ENCODE measurements at regions of chr9 and their contacts with region 1.

Region 1: GRCh38 chr9:20319641-20320337 is 302.5 kb downstream of the MLLT3 start:
- DNase-seq: peak in 2 of 5 donors; percentile 15 to 56
- H3K4me3 ChIP-seq: no peak overlapping the region
- H3K4me3 Mint-ChIP-seq: peak overlapping the region in 4 of 8 donors; percentile 20 to 53 (median 44)
- H3K27ac ChIP-seq: no peak overlapping the region
- H3K27ac Mint-ChIP-seq: peak overlapping the region; percentile 29 to 81 (median 61)
- H3K4me1 ChIP-seq: peaks cover 77% of the 10 kb centered on the region
- H3K4me1 Mint-ChIP-seq: peaks cover 49 to 92% (median 84%) of the 10 kb centered on the region in 4 donors
- H3K27me3 ChIP-seq: no peaks in the 10 kb centered on the region
- H3K27me3 Mint-ChIP-seq: no peaks in the 10 kb centered on the region

Region 2: DNA sequence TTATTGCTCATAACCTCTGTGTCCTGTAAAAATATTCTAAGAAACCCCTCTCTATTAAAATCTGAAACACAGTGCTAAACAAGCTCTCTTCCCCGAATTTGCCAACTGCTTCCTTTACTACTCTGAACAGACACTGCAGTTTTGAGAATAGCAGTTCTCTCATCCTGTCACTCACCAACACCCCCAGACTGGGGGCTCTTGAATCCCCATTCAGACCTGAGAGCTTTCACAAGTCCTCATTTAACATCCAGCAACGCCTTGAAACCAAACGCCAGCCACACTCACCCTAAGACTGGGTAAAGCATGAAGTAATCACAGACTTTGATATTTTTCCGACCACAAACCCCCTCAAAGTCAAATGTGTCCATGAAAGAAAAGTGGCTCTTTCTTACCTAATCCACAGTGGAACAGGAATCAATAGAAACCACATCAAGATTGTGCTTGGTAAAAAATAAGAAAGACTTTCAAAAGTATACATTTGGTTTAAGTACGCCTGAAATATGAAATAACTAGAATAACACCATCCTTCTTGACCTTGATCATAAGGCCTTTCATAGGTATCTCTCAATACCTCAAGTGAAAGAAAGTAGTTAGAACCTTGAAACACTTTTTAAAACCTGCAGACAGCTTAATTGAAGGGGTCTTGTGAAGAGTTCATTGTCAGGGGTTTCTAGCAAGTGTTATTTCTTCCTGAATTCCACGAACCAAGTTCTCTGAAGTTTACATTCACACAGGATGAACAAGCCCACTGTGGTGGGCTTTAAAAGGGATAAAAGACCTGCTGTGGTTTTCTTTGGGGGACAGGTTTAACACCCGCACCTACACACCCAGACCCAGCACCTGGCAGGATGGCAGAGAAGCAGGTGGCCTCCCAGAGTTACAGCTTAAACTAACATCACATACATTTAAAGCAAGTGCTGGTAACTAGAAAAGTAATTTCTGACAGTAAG is 110.1 kb before region 1 on chr9:
- CTCF ChIA-PET with region 1: no interaction called
- POLR2A ChIA-PET with region 1: no interaction called
- intact Hi-C with region 1: loop called (anchors 10 kb)
- DNase-seq: peak; percentile 32 to 61 (median 37)
- H3K4me3 ChIP-seq: no peak overlapping the region
- H3K4me3 Mint-ChIP-seq: peak overlapping the region; percentile 18 to 80 (median 62)
- H3K27ac ChIP-seq: peak overlapping the region; percentile 3
- H3K27ac Mint-ChIP-seq: peak overlapping the region; percentile 50 to 88 (median 81)
- H3K4me1 ChIP-seq: peaks cover 26% of the 10 kb centered on the region
- H3K4me1 Mint-ChIP-seq: peaks cover 20 to 30% (median 27%) of the 10 kb centered on the region in 4 donors
- H3K27me3 ChIP-seq: no peaks in the 10 kb centered on the region
- H3K27me3 Mint-ChIP-seq: no peaks in the 10 kb centered on the region

Region 3: GRCh38 chr9:20242510-20243189 is 77.1 kb before region 1 on chr9:
- CTCF ChIA-PET with region 1: no interaction called
- POLR2A ChIA-PET with region 1: no interaction called
- intact Hi-C with region 1: loop called (anchors 5 kb)
- DNase-seq: peak; percentile 45 to 60 (median 57)
- H3K4me3 ChIP-seq: peak overlapping the region; percentile 1 to 35
- H3K4me3 Mint-ChIP-seq: peak overlapping the region; percentile 34 to 92 (median 80)
- H3K27ac ChIP-seq: no peak overlapping the region
- H3K27ac Mint-ChIP-seq: peak overlapping the region; percentile 5 to 86 (median 48)
- H3K4me1 ChIP-seq: peaks cover 37% of the 10 kb centered on the region
- H3K4me1 Mint-ChIP-seq: peaks cover 22 to 66% (median 31%) of the 10 kb centered on the region in 4 donors
- H3K27me3 ChIP-seq: no peaks in the 10 kb centered on the region
- H3K27me3 Mint-ChIP-seq: no peaks in the 10 kb centered on the region

Region 4: DNA sequence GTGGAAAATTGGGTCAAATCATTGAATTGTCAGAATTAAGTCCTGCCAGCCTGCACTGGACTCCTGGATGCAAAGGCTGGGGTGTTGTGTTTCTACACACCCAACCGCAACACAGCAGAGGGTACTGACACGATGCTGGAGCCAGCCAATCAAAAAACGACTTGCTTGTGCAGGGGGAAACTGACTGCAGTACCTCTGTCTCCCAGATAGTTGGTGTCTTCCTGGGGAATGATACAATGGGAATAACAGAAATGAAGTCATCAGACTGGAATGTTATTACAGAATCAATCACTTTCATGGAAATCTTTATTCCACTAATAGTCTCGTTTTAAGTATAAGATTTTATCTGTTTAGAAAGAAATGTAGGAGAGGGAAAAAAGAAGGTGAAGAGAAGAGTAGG is 27.8 kb before region 1 on chr9:
- CTCF ChIA-PET with region 1: no interaction called
- POLR2A ChIA-PET with region 1: no interaction called
- intact Hi-C with region 1: no loop called
- DNase-seq: no peak
- H3K4me3 ChIP-seq: no peak overlapping the region
- H3K4me3 Mint-ChIP-seq: no peak overlapping the region
- H3K27ac ChIP-seq: no peak overlapping the region
- H3K27ac Mint-ChIP-seq: no peak overlapping the region
- H3K4me1 ChIP-seq: no peaks in the 10 kb centered on the region
- H3K4me1 Mint-ChIP-seq: peaks cover 0 to 7% (median under 1%) of the 10 kb centered on the region in 4 donors
- H3K27me3 ChIP-seq: no peaks in the 10 kb centered on the region
- H3K27me3 Mint-ChIP-seq: no peaks in the 10 kb centered on the region